Heart left ventricle (tissue), 16 donors: ENCODE measurements at regions of chr10 and their contacts with region 1.

Region 1: GRCh38 chr10:88064608-88065382 is 201.4 kb downstream of the PTEN start:
- DNase-seq: peak; percentile 60 to 86 (median 73)
- ATAC-seq: peak; percentile 51 to 69 (median 58)
- H3K4me3 ChIP-seq: no peak overlapping the region
- H3K27ac ChIP-seq: peak overlapping the region in 8 of 12 donors; percentile 7 to 78 (median 20)
- H3K4me1 ChIP-seq: peaks cover 10 to 79% (median 39%) of the 10 kb centered on the region in 12 donors
- H3K27me3 ChIP-seq: no peaks in the 10 kb centered on the region
- CTCF ChIP-seq: no peak
- POLR2A ChIP-seq: no peak

Region 2: DNA sequence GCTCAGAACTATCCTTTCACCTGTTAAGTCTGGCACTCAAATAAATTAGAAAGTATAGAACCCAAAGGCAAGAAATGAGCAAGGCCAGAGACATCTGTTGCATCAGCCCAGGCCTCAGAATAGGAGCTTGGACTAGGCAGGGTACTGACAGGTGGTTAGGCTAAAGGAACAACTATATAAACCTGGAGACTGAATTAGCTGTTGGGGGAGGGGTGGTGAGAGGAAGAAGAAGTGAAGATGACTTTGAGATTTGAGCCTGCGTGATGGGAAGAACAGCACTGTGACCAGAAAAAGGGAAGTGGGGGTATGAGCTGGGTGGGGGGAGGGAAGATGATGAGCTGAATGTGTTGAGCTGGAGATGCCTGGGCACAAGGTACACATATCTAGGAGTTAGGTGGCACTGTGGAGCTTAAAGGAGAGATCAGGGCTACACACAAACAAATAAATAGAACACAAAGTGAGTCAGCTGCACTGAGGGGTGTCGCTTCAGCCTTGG is 43.4 kb after region 1 on chr10:
- intact Hi-C with region 1: loop called in 1 of 10 experiments (anchors 5 kb)
- DNase-seq: no peak
- ATAC-seq: peak in 3 of 4 donors; percentile 34 to 68 (median 50)
- H3K4me3 ChIP-seq: no peak overlapping the region
- H3K27ac ChIP-seq: peak overlapping the region in 1 of 12 donors; percentile 38
- H3K4me1 ChIP-seq: peaks cover 0 to 51% (median 0%) of the 10 kb centered on the region in 12 donors
- H3K27me3 ChIP-seq: no peaks in the 10 kb centered on the region
- CTCF ChIP-seq: no peak
- POLR2A ChIP-seq: no peak

Region 3: DNA sequence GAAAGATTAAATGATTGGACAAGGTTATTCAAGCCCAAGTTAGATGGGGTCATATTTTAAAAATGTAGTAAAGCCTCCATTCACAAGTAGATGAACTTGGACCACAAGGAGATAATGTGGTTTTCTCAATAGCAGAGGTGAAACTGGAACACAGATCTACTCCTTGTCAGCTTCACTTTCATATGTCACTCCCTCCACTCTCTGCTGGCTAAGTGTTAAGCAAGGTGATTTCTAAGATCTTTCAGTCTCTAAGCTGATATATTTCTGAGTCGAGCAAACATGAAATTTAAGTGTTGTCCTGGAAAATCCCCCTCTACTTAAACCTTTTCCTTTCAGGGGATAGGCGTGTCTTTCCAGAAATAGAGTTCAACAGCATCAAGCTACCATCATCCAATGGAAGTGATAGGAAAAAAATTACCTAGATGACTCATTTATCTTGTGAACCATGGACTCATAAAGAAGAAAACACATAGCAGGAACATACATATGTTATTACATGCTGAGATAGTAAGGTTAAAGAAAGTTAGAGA is 73.6 kb after region 1 on chr10:
- intact Hi-C with region 1: loop called in 1 of 10 experiments (anchors 5 kb)
- DNase-seq: no peak
- ATAC-seq: no peak
- H3K4me3 ChIP-seq: no peak overlapping the region
- H3K27ac ChIP-seq: no peak overlapping the region
- H3K4me1 ChIP-seq: no peaks in the 10 kb centered on the region
- H3K27me3 ChIP-seq: no peaks in the 10 kb centered on the region
- CTCF ChIP-seq: no peak
- POLR2A ChIP-seq: no peak